ENCODE measurements at regions of chr12 and their contacts with region 1.

Region 1: GRCh38 chr12:569803-570434 is 93.3 kb downstream of the NINJ2 start:
- DNase-seq: peak; percentile 59
- ATAC-seq: peak; percentile 68
- H3K4me3 ChIP-seq: peak overlapping the region; percentile 58 to 81
- H3K27ac ChIP-seq: peak overlapping the region; percentile 93
- H3K4me1 ChIP-seq: peaks cover 20 to 52% of the 10 kb centered on the region in 2 experiments
- H3K27me3 ChIP-seq: no peaks in the 10 kb centered on the region
- CTCF ChIP-seq: peak in 2 of 3 experiments; percentile 88 to 90; a peak in 4 of 6 replicates
- POLR2A ChIP-seq: no peak
- RAD21 ChIP-seq: no peak

Region 2: GRCh38 chr12:356276-356988 is 213.5 kb before region 1 on chr12:
- CTCF ChIA-PET with region 1: no interaction called
- POLR2A ChIA-PET with region 1: no interaction called
- RAD21 ChIA-PET with region 1: no interaction called
- intact Hi-C with region 1: no loop called
- DNase-seq: no peak
- ATAC-seq: no peak
- H3K4me3 ChIP-seq: no peak overlapping the region
- H3K27ac ChIP-seq: no peak overlapping the region
- H3K4me1 ChIP-seq: peaks cover 25 to 35% of the 10 kb centered on the region in 2 experiments
- H3K27me3 ChIP-seq: no peaks in the 10 kb centered on the region
- CTCF ChIP-seq: no peak
- POLR2A ChIP-seq: no peak
- RAD21 ChIP-seq: no peak

Region 3: DNA sequence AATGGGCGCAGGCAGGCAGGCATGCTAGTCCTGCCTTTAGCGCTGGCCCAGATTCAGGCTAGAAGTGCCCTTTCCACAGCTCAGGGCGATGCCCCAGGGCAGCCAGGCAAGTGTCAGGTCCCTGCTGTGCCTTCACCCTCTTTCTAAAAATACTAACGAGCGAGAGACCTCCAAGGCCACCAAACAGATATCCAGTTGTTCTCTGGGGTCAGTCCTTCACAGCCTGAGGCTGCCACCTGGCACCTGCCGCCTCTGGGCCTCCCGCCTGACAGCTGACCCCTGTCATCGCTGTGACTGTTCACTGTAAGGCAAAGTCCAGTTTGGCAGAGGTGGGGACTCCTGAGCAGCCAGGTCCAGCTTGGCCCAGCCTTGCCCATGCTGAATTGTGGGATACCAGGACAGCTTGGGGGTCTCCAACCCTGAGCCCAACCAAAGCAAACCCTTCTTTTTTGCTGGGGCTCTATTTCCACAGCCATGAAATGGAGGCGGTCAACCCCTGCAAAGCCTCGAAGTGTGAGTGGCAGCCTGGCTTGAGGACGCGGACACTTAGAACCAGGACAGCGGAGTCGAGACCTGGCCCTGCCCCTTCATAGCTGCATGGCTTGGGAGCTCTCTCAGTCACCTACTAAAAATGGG is 13.4 kb after region 1 on chr12:
- CTCF ChIA-PET with region 1: no interaction called
- POLR2A ChIA-PET with region 1: no interaction called
- RAD21 ChIA-PET with region 1: no interaction called
- intact Hi-C with region 1: no loop called
- DNase-seq: no peak
- ATAC-seq: no peak
- H3K4me3 ChIP-seq: no peak overlapping the region
- H3K27ac ChIP-seq: no peak overlapping the region
- H3K4me1 ChIP-seq: no peaks in the 10 kb centered on the region
- H3K27me3 ChIP-seq: no peaks in the 10 kb centered on the region
- CTCF ChIP-seq: no peak
- POLR2A ChIP-seq: no peak
- RAD21 ChIP-seq: no peak

Region 4: GRCh38 chr12:751192-751998 is 181.5 kb after region 1 on chr12:
- CTCF ChIA-PET with region 1: interaction called, 41 read pairs
- POLR2A ChIA-PET with region 1: interaction called, 23 read pairs
- RAD21 ChIA-PET with region 1: interaction called, 3 read pairs
- intact Hi-C with region 1: loop called (anchors 1 kb)
- DNase-seq: peak; percentile 93
- ATAC-seq: peak; percentile 67
- H3K4me3 ChIP-seq: peak overlapping the region; percentile 46 to 75
- H3K27ac ChIP-seq: peak overlapping the region; percentile 62
- H3K4me1 ChIP-seq: peaks cover 15 to 35% of the 10 kb centered on the region in 2 experiments; a peak in 3 of 4 replicates
- H3K27me3 ChIP-seq: no peaks in the 10 kb centered on the region
- CTCF ChIP-seq: peak; percentile 68 to 81 (median 78)
- POLR2A ChIP-seq: peak; percentile 49
- RAD21 ChIP-seq: peak; percentile 77

Region 5: DNA sequence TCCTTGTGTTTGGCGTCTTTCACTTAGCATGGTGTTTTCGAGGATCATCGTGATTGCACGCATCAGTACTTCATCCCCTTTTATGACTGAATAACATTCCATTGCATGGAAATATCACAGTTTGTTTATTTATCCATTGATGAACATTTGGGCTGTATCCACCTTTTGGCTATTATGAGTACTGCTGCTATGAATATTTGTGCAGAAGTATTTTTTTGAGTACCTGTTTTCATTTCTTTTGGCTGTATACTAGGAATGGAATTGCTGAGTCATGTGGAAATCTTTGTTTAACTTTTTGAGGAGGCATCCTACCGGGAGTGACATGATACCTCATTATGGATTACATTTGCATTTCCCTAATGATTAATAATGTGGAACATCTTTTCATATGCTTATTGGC is 248.8 kb after region 1 on chr12:
- CTCF ChIA-PET with region 1: interaction called, 24 read pairs
- POLR2A ChIA-PET with region 1: no interaction called
- RAD21 ChIA-PET with region 1: no interaction called
- intact Hi-C with region 1: loop called (anchors 2 kb)
- DNase-seq: no peak
- ATAC-seq: no peak
- H3K4me3 ChIP-seq: no peak overlapping the region
- H3K27ac ChIP-seq: no peak overlapping the region
- H3K4me1 ChIP-seq: peaks cover 4 to 11% of the 10 kb centered on the region in 2 experiments; a peak in 3 of 4 replicates
- H3K27me3 ChIP-seq: no peaks in the 10 kb centered on the region
- CTCF ChIP-seq: peak in 1 of 3 experiments; percentile 29; a peak in 1 of 6 replicates
- POLR2A ChIP-seq: no peak
- RAD21 ChIP-seq: no peak

Region 6: DNA sequence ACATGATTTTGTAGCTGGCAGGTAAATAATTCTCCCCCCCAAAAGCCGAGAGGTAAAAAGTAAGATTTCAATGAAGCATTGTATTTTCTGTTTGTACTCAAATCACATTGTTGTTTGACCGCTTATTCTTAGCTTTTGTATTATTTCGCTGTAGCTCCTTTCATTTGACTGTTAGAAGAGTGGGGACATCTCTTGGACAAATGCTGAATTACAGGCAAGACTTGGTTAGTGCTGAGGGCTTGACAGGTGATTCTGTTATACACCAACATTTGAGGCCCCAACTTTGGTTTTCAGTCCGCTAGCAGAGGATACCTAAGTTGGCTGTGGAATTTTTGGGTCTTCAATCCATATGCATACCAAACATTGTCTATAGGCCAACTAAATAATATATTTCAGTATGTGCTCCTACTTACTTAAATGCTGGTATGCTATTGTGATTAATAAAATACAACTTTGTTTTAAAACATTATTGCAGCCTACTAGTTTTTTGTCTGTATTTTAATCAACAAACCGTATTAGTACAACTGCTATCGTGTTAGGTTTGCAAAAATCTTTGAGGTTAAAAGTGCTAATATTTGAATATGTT is 523.3 kb after region 1 on chr12:
- CTCF ChIA-PET with region 1: interaction called, 23 read pairs
- POLR2A ChIA-PET with region 1: interaction called, 3 read pairs
- RAD21 ChIA-PET with region 1: interaction called in 1 of 2 experiments, 3 read pairs
- intact Hi-C with region 1: loop called (anchors 5 kb)
- DNase-seq: peak; percentile 53
- ATAC-seq: peak; percentile 85
- H3K4me3 ChIP-seq: no peak overlapping the region
- H3K27ac ChIP-seq: no peak overlapping the region
- H3K4me1 ChIP-seq: no peaks in the 10 kb centered on the region
- H3K27me3 ChIP-seq: no peaks in the 10 kb centered on the region
- CTCF ChIP-seq: peak; percentile 53 to 76 (median 74); a peak in 5 of 6 replicates
- POLR2A ChIP-seq: no peak
- RAD21 ChIP-seq: peak; percentile 73

Region 7: GRCh38 chr12:1117970-1118563 is 548.1 kb after region 1 on chr12:
- CTCF ChIA-PET with region 1: interaction called, 12 read pairs
- POLR2A ChIA-PET with region 1: no interaction called
- RAD21 ChIA-PET with region 1: no interaction called
- intact Hi-C with region 1: loop called (anchors 5 kb)
- DNase-seq: peak; percentile 59
- ATAC-seq: peak; percentile 59
- H3K4me3 ChIP-seq: no peak overlapping the region
- H3K27ac ChIP-seq: no peak overlapping the region
- H3K4me1 ChIP-seq: peaks cover 17 to 23% of the 10 kb centered on the region in 2 experiments
- H3K27me3 ChIP-seq: no peaks in the 10 kb centered on the region
- CTCF ChIP-seq: peak; percentile 71 to 94 (median 81)
- POLR2A ChIP-seq: no peak
- RAD21 ChIP-seq: peak; percentile 92

Region 8: DNA sequence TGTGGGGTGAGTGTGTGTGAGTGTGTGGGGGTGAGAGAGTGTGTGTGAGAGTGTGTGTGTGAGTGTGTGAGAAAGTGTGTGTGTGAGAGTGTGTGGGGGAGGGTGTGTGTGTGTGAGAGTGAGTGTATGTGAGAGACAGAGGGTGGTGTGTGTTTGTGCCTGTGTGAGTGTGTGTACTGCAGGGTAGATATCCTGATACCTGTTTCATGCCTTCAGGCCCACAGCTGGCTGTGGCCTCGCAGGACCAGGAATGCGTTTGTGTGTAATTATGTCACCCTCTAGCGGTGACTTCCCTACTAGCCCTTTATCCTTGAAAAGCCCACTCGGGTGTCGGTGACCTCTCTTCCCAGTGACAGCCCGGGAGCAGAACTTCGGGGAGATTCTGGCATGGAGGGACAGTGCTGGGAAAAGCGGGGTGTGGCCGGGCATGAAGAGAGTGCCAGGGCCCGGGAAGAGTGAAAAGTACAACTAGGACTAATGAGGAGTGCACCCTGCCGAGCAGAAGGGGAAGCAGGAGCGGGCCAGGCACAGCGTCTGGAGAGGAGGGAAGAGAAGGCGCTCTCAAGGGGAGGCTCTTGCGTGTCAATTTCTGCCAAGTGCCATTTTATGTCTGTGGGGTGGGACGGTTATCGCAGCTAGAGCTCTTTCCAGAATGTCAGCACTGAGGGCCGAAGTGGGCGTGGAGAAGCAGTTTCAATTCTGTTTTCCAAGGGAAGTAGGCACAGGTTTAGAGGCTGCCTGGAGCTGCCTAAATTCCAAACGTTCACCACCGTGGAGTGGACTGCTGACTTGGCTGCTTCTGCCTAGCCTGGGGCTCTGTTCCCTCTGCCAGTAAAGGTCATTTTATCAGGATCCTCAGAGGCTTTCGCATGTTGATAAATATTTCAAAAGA is 1035.5 kb after region 1 on chr12:
- CTCF ChIA-PET with region 1: interaction called, 3 read pairs
- POLR2A ChIA-PET with region 1: no interaction called
- RAD21 ChIA-PET with region 1: no interaction called
- intact Hi-C with region 1: loop called (anchors 2 kb)
- DNase-seq: peak; percentile 78
- ATAC-seq: peak; percentile 84
- H3K4me3 ChIP-seq: peak overlapping the region; percentile 41 to 60
- H3K27ac ChIP-seq: peak overlapping the region; percentile 69
- H3K4me1 ChIP-seq: peaks cover 8 to 22% of the 10 kb centered on the region in 2 experiments
- H3K27me3 ChIP-seq: no peaks in the 10 kb centered on the region
- CTCF ChIP-seq: peak; percentile 77 to 80 (median 79)
- POLR2A ChIP-seq: no peak
- RAD21 ChIP-seq: peak; percentile 88

Measured in HCT116 (cell line).